ENCODE measurements at regions of chr2 and their contacts with region 1.

Region 1: DNA sequence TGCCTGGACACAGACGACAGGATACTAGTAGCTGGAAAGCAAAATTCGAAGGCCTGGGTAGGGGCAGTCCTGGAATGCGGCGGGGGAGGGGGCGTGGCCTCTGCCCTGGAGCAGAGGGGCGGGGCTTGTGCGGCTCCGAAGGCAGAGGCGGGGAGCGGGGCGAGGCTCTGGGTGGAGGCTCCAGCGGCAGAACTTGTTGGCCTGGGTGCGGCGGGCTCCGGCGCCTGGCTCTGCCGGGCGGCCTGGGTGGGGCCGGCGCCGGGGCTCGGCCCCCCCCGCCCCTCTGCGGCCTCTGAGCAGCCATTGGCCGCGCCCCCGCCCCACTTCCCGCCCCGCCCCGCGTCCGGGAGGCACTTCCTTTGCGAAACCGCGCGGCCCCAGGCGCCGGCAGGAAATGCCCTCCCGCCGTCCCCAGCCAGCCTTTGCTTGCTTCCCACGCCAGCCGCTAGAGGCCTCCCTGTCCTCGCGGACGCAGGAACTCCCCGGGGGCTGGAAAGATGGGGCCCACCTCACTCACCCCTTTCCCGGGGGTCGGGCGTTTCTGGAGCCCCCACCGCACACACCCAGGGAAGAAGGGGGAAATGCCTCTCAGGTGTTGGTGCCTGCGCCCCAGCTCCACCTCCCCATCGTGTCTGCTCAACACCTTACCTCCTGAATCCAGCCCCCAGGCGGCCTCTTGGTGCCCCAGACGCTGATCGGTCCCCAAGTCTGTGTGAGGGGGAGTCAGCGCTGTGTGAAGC is 6.7 kb downstream of the CTDSP1 start:
- DNase-seq: peak; percentile 99

Region 2: DNA sequence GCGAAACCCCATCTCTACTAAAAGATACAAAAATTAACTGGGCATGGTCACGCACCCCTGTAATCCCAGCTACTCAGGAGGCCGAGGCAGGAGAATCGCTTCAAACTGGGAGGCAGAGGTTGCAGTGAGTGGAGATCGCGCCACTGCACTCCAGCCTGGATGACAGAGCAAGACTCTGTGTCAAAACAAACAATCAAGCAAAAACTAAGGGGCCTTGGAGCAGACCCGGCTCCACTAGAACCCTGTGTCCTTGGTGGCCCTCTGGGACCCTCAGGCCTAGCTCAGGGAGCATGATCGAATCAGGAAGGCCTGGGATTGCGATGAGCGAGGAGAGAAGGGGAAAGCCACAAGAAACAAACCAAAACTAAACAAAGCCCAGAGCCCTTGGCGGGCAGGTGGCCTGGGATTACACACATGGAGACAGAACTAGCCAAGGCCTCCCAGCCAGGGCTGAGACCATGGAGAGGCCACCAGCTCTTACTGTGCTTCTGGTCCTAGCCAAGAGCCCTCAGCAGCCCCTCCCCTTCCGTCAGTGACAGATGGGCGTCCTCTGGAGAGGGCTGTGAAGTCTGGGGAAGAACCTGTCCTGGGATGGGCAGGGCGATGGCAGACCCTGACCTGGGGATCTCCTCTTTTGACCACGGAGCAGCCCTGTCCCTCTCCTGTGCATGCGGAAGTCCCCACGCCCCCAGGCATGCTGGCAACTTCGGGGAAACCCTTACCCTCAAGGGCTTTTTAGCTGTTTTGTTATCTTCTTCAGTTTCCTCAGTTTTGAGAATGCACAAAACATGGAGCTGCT is 77.2 kb before region 1 on chr2:
- intact Hi-C with region 1: no loop called
- DNase-seq: no peak

Region 3: DNA sequence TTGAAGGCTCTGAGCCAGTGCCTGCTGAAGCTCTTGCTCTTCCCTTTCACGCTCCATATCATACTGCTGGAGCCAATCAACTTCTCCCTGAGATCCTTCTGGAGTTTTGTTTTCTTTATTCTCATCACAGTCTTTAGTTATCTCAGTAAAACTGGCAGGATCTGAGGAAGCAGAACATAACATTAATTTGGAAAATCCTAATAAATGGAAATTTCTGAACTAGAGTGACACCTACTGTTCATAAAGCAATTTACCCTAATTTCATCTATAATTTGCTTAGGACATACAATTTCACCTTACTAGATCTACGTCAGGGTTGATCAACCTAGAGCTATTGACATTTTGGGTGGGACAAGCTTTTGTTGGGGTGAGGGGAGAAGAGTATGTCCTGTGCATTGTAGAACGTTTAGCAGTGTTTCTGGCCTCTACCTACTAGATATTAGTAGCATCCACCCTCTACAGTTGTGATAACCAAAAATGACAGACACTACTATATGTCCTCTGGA is 59.7 kb after region 1 on chr2:
- intact Hi-C with region 1: loop called (anchors 2 kb)
- DNase-seq: no peak

Region 4: GRCh38 chr2:218659258-218659987 is 253.0 kb after region 1 on chr2 and contains the starts of genes BCS1L and ZNF142:
- intact Hi-C with region 1: loop called (anchors 10 kb)
- DNase-seq: peak; percentile 97
- total RNA-seq, gene BCS1L: 36.1 TPM
- total RNA-seq, gene ZNF142: 21.3 TPM